PC-3 (cell line): ENCODE measurements at regions of chr2 and their contacts with region 1.

Region 1: DNA sequence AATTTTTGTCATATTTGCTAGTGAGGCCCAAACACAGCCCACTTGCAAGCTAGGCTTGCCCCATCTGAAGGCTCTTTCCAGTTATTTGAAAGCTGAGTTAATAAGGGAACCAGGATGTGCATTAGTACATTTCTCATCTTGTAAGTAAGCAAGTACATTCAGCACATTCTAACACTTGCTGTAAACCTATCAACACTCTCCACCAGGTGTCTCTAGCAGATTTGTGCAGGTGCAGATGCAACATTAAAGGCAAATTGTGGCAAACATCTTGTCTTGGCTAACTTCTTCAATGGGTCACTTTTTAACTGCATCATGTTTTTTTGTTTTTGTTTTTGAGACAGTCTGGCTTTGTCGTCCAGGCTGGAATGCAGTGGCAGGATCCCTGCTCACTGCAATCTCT is 25.3 kb upstream of the MFSD6 start:
- DNase-seq: peak; percentile 72
- ATAC-seq: peak; percentile 42
- H3K4me3 ChIP-seq: no peak overlapping the region
- H3K27ac ChIP-seq: no peak overlapping the region
- H3K4me1 ChIP-seq: peaks cover 11% of the 10 kb centered on the region
- H3K27me3 ChIP-seq: no peaks in the 10 kb centered on the region
- CTCF ChIP-seq: peak; percentile 80

Region 2: GRCh38 chr2:190408538-190409271 is 25.9 kb after region 1 on chr2:
- CTCF ChIA-PET with region 1: no interaction called
- POLR2A ChIA-PET with region 1: no interaction called
- intact Hi-C with region 1: no loop called
- DNase-seq: peak; percentile 44
- ATAC-seq: peak; percentile 59
- H3K4me3 ChIP-seq: peak overlapping the region; percentile 96
- H3K27ac ChIP-seq: 0 out of 2 replicates have a peak overlapping the region, but pooled peaks have one; percentile 7
- H3K4me1 ChIP-seq: peaks cover 20% of the 10 kb centered on the region
- H3K27me3 ChIP-seq: no peaks in the 10 kb centered on the region
- CTCF ChIP-seq: no peak

Region 3: GRCh38 chr2:190534310-190535120 is 151.7 kb after region 1 on chr2 and contains the start of gene NEMP2:
- CTCF ChIA-PET with region 1: no interaction called
- POLR2A ChIA-PET with region 1: no interaction called
- intact Hi-C with region 1: no loop called
- DNase-seq: peak; percentile 75
- ATAC-seq: peak; percentile 82
- H3K4me3 ChIP-seq: peak within 1 kb of the TSS; percentile 91
- H3K27ac ChIP-seq: peak within 1 kb of the TSS; percentile 73
- H3K4me1 ChIP-seq: peaks cover 14% of the 10 kb centered on the region
- H3K27me3 ChIP-seq: no peaks in the 10 kb centered on the region
- CTCF ChIP-seq: no peak
- total RNA-seq, gene NEMP2: 2.5 and 3.8 TPM in 2 replicates

Region 4: DNA sequence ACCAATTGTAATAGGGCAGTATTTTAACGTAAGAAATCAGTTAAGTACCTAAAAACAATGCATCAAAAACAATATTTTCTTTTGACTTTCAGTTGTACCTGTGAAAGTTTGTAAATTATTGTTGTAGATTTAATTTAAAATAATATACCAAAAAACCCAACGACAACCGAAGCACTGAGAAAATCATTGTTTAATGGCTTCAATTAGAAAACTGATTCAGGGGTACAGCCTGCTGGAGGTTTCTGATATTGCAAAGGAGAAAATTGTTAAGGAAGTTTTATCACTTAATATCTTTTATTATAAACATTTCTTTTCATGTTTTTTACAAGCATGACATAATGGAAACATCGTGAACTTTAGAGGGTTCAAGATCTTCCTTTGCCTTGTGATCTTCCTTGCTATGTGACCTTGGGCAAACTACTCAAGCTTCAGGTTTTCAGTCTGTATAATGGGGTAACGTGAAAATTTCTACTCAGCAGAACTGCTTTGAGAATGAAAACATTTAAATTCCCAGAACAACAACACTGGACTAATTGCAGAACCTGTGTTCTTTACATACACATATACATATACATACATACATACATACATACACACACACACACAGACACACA is 421.4 kb after region 1 on chr2:
- CTCF ChIA-PET with region 1: no interaction called
- POLR2A ChIA-PET with region 1: no interaction called
- intact Hi-C with region 1: loop called (anchors 1 kb)
- DNase-seq: peak; percentile 69
- ATAC-seq: no peak
- H3K4me3 ChIP-seq: no peak overlapping the region
- H3K27ac ChIP-seq: no peak overlapping the region
- H3K4me1 ChIP-seq: peaks cover 4% of the 10 kb centered on the region
- H3K27me3 ChIP-seq: no peaks in the 10 kb centered on the region
- CTCF ChIP-seq: peak; percentile 79

Region 5: DNA sequence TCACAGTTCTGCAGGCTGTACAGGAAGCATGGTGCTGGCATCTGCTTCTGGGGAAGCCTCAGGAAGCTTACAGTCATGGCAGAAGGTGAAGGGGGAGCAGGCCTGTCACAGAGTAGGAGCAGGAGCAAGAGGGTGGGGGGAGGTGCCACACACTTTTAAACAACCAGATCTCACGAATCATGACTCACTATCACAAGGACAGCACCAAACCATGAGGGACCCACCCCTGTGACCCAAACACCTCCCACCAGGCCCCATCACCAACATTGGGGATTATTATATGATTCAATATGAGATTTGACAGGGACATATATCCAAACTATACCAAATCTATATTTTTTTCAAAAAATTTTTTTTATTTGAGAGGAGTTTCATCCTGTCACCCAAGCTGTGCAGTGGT is 446.8 kb after region 1 on chr2:
- CTCF ChIA-PET with region 1: no interaction called
- POLR2A ChIA-PET with region 1: no interaction called
- intact Hi-C with region 1: no loop called
- DNase-seq: no peak
- ATAC-seq: no peak
- H3K4me3 ChIP-seq: no peak overlapping the region
- H3K27ac ChIP-seq: no peak overlapping the region
- H3K4me1 ChIP-seq: peaks cover 5% of the 10 kb centered on the region
- H3K27me3 ChIP-seq: no peaks in the 10 kb centered on the region
- CTCF ChIP-seq: no peak